Caco-2 (cell line): ENCODE measurements at regions of chr10 and their contacts with region 1.

Region 1: DNA sequence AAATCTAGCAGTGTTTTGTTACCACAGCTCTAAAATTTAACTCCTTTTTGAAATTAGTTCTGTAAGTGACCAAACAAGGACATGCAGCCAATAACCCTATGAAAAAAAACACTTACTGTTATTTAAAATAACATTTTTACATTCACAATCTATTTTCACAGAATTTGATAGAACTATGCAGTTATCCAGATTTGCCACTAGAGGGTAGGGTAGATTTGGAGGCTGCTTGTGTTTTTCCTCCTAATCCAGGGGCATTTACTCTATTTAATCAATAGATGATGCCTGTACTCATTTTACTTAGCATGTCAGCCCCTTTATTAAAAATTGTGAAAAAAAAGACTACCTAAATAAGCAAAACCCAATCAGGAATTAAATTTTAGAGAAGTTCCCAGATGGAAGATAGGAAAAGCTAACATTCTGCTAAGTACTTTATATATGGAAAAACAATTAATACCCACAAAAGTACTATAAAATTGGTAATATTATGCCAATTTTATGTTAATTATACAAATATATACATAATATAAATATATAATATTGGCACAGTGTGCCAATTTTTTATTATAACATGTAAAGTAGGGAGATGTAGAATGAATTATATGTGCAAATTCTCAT is 18.1 kb upstream of the LIPK start:
- DNase-seq: peak in 1 of 2 experiments; percentile 29
- H3K4me3 ChIP-seq: no peak overlapping the region
- H3K4me3 Mint-ChIP-seq: no peak overlapping the region
- H3K27ac Mint-ChIP-seq: no peak overlapping the region
- H3K4me1 ChIP-seq: no peaks in the 10 kb centered on the region
- H3K4me1 Mint-ChIP-seq: no peaks in the 10 kb centered on the region
- H3K27me3 ChIP-seq: no peaks in the 10 kb centered on the region
- H3K27me3 Mint-ChIP-seq: peaks cover 3% of the 10 kb centered on the region
- CTCF ChIP-seq: peak; percentile 73 to 87

Region 2: GRCh38 chr10:88565072-88565471 is 122.9 kb before region 1 on chr10:
- CTCF ChIA-PET with region 1: no interaction called
- POLR2A ChIA-PET with region 1: no interaction called
- intact Hi-C with region 1: loop called (anchors 2 kb)
- DNase-seq: no peak
- H3K4me3 ChIP-seq: no peak overlapping the region
- H3K4me3 Mint-ChIP-seq: no peak overlapping the region
- H3K27ac Mint-ChIP-seq: no peak overlapping the region
- H3K4me1 ChIP-seq: no peaks in the 10 kb centered on the region
- H3K4me1 Mint-ChIP-seq: no peaks in the 10 kb centered on the region
- H3K27me3 ChIP-seq: no peaks in the 10 kb centered on the region
- H3K27me3 Mint-ChIP-seq: no peaks in the 10 kb centered on the region
- CTCF ChIP-seq: peak; percentile 36 to 37

Region 3: DNA sequence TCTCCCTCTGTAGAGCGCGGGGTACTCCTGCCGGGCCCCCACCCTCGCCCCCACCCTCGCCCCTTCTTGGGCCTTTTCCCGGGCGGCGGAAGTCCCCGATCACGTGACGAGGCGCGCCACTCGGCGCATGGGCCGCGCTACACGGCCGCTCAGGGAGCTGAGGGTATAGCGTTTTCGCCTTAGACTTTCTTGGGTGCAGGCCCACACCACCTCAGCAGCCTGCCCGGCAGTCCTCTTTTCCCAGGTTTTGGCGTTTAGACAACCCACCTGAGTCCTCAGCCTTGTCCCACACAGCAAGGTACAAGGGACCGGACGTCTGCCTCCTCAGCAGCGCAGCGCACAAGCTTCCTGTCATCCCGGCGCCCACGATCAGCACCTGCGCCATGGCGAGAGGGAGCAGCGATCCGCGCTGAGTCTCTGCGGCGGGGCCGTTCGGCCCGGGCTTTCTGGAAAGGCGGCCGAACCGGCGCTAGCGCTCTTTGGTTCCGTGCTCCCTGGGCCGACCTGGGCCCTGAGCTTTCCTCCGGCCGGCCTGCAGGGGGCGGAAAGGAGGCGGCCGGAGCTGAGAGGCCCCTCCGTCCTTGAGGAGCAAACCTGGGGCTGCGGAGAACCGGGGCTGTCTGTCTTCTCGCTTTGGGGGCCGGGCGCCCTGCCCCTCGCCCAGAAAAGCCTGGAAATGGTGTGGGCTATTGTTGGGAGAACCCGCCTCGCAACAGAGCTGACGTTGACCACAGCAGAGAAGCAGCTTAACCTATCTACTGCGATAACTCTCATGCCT is 105.0 kb before region 1 on chr10 and contains the start of gene RNLS:
- CTCF ChIA-PET with region 1: no interaction called
- POLR2A ChIA-PET with region 1: no interaction called
- intact Hi-C with region 1: no loop called
- DNase-seq: peak; percentile 72 to 76
- H3K4me3 ChIP-seq: peak within 1 kb of the TSS; percentile 74
- H3K4me3 Mint-ChIP-seq: peak within 1 kb of the TSS; percentile 88
- H3K27ac Mint-ChIP-seq: peak within 1 kb of the TSS; percentile 85
- H3K4me1 ChIP-seq: no peaks in the 10 kb centered on the region
- H3K4me1 Mint-ChIP-seq: peaks cover 7% of the 10 kb centered on the region
- H3K27me3 ChIP-seq: no peaks in the 10 kb centered on the region
- H3K27me3 Mint-ChIP-seq: peaks cover 9% of the 10 kb centered on the region
- CTCF ChIP-seq: peak; percentile 68 to 86
- total RNA-seq, gene RNLS: 5.7 and 6.7 TPM in 2 replicates

Region 4: DNA sequence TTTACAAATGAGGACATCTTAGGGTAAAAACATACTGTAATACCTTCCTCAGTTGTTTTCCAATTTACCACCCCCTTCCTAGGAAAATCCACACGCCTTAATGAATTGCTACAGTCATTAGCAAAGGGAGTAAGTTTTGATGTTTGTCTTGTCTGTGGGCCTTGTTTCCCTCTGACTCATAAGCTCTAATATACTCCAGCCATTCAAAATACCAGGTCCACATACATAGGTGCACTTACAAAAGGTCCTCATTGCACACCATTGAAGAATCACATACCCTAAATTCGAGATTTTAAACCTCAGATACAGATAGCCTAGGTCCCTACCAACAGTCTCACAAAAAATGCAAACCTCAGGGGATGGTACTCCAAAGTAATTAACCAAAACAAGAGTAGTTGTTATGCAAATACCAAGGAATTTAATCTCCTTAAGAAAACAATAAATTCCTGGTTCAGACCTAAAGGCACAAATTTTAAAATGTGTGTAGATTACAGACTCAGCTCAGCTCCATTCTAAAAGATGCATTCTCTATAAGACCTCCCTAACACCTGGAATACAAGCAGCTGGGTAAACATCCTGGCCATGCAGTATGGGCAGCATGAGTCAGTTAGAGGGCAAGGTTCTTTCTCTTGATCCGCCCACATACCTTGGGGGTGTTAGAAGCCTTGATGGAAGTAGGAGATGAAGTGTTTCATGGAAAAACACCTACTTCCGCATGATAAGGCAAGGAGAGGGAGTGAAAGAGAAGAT is 15.1 kb after region 1 on chr10:
- CTCF ChIA-PET with region 1: no interaction called
- POLR2A ChIA-PET with region 1: no interaction called
- intact Hi-C with region 1: loop called (anchors 1 kb)
- DNase-seq: peak; percentile 87 to 92
- H3K4me3 ChIP-seq: no peak overlapping the region
- H3K4me3 Mint-ChIP-seq: peak overlapping the region; percentile 4
- H3K27ac Mint-ChIP-seq: peak overlapping the region; percentile 88
- H3K4me1 ChIP-seq: peaks cover 17% of the 10 kb centered on the region
- H3K4me1 Mint-ChIP-seq: peaks cover 26% of the 10 kb centered on the region
- H3K27me3 ChIP-seq: no peaks in the 10 kb centered on the region
- H3K27me3 Mint-ChIP-seq: no peaks in the 10 kb centered on the region
- CTCF ChIP-seq: no peak

Region 5: GRCh38 chr10:88728107-88728763 is 40.3 kb after region 1 on chr10:
- CTCF ChIA-PET with region 1: no interaction called
- POLR2A ChIA-PET with region 1: no interaction called
- intact Hi-C with region 1: loop called (anchors 5 kb)
- DNase-seq: peak; percentile 34 to 48
- H3K4me3 ChIP-seq: no peak overlapping the region
- H3K4me3 Mint-ChIP-seq: no peak overlapping the region
- H3K27ac Mint-ChIP-seq: no peak overlapping the region
- H3K4me1 ChIP-seq: no peaks in the 10 kb centered on the region
- H3K4me1 Mint-ChIP-seq: no peaks in the 10 kb centered on the region
- H3K27me3 ChIP-seq: no peaks in the 10 kb centered on the region
- H3K27me3 Mint-ChIP-seq: peaks cover 8% of the 10 kb centered on the region
- CTCF ChIP-seq: peak in 1 of 2 experiments; percentile 19

Region 6: GRCh38 chr10:88744002-88744401 is 56.0 kb after region 1 on chr10:
- CTCF ChIA-PET with region 1: no interaction called
- POLR2A ChIA-PET with region 1: no interaction called
- intact Hi-C with region 1: loop called (anchors 1 kb)
- DNase-seq: peak in 1 of 2 experiments; percentile 28
- H3K4me3 ChIP-seq: no peak overlapping the region
- H3K4me3 Mint-ChIP-seq: no peak overlapping the region
- H3K27ac Mint-ChIP-seq: no peak overlapping the region
- H3K4me1 ChIP-seq: no peaks in the 10 kb centered on the region
- H3K4me1 Mint-ChIP-seq: no peaks in the 10 kb centered on the region
- H3K27me3 ChIP-seq: no peaks in the 10 kb centered on the region
- H3K27me3 Mint-ChIP-seq: peaks cover 11% of the 10 kb centered on the region
- CTCF ChIP-seq: peak in 1 of 2 experiments; percentile 38

Region 7: GRCh38 chr10:88791924-88792323 is 104.0 kb after region 1 on chr10:
- CTCF ChIA-PET with region 1: interaction called, 3 read pairs
- POLR2A ChIA-PET with region 1: no interaction called
- intact Hi-C with region 1: loop called (anchors 1 kb)
- DNase-seq: peak; percentile 49 to 52
- H3K4me3 ChIP-seq: no peak overlapping the region
- H3K4me3 Mint-ChIP-seq: no peak overlapping the region
- H3K27ac Mint-ChIP-seq: no peak overlapping the region
- H3K4me1 ChIP-seq: no peaks in the 10 kb centered on the region
- H3K4me1 Mint-ChIP-seq: no peaks in the 10 kb centered on the region
- H3K27me3 ChIP-seq: no peaks in the 10 kb centered on the region
- H3K27me3 Mint-ChIP-seq: peaks cover 7% of the 10 kb centered on the region
- CTCF ChIP-seq: peak; percentile 66 to 73

Region 8: GRCh38 chr10:88810196-88810961 is 122.4 kb after region 1 on chr10:
- CTCF ChIA-PET with region 1: no interaction called
- POLR2A ChIA-PET with region 1: no interaction called
- intact Hi-C with region 1: loop called (anchors 1 kb)
- DNase-seq: peak; percentile 37 to 56
- H3K4me3 ChIP-seq: no peak overlapping the region
- H3K4me3 Mint-ChIP-seq: no peak overlapping the region
- H3K27ac Mint-ChIP-seq: no peak overlapping the region
- H3K4me1 ChIP-seq: no peaks in the 10 kb centered on the region
- H3K4me1 Mint-ChIP-seq: no peaks in the 10 kb centered on the region
- H3K27me3 ChIP-seq: peaks cover 2% of the 10 kb centered on the region; the same call in 1 of the 2 replicates
- H3K27me3 Mint-ChIP-seq: peaks cover 5% of the 10 kb centered on the region
- CTCF ChIP-seq: peak; percentile 65 to 76